PC-9 (cell line): ENCODE measurements at regions of chr7 and their contacts with region 1.

Region 1: GRCh38 chr7:41224063-41224806 is 478.7 kb downstream of the INHBA start:
- DNase-seq: peak; percentile 54 to 100
- H3K4me3 ChIP-seq: no peak overlapping the region
- H3K27ac ChIP-seq: peak overlapping the region; percentile 73
- H3K4me1 ChIP-seq: peaks cover 23% of the 10 kb centered on the region
- H3K27me3 ChIP-seq: no peaks in the 10 kb centered on the region
- CTCF ChIP-seq: no peak

Region 2: DNA sequence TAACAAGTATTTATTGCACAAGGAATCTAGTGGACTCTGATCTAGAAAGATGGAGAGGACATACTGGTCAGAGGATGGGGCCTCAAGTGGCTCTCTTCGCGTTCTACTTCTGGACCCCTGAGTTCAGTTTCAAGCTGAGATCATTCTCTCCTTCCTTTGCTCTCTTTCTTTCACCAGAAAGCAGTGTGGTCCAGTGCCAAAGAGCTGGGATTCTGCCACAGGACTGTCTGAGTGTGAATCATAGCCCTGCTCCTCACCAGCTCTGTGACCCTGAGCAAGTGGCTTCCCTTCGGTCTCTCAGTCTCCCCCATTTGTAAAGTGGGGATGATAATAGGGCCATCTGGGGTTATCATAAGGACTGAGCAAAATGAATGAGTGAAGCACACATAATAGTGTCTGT is 374.2 kb before region 1 on chr7:
- CTCF ChIA-PET with region 1: no interaction called
- POLR2A ChIA-PET with region 1: no interaction called
- intact Hi-C with region 1: no loop called
- DNase-seq: no peak
- H3K4me3 ChIP-seq: no peak overlapping the region
- H3K27ac ChIP-seq: no peak overlapping the region
- H3K4me1 ChIP-seq: no peaks in the 10 kb centered on the region
- H3K27me3 ChIP-seq: no peaks in the 10 kb centered on the region
- CTCF ChIP-seq: no peak

Region 3: DNA sequence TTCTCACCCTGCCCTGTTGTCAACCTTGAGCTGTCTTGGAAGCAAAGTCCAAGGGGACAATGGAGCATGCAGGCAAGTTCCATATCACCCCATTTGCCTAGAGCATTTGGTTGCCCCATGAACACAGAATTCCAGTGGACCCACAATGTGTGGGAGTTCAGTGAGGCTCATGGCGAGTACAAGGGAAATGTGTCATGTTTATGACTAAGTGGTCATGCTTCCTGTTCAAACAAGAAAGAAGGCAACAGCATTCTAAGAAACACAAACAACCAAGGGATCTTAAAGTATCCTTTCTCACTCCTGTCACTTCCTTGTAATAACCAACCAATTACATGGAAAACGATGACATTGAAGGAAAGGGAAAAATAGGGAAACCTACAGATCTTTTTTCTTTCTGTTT is 34.4 kb before region 1 on chr7:
- CTCF ChIA-PET with region 1: no interaction called
- POLR2A ChIA-PET with region 1: no interaction called
- intact Hi-C with region 1: loop called (anchors 1 kb)
- DNase-seq: peak; percentile 61 to 99
- H3K4me3 ChIP-seq: no peak overlapping the region
- H3K27ac ChIP-seq: peak overlapping the region; percentile 93
- H3K4me1 ChIP-seq: peaks cover 46% of the 10 kb centered on the region
- H3K27me3 ChIP-seq: no peaks in the 10 kb centered on the region
- CTCF ChIP-seq: no peak

Region 4: GRCh38 chr7:41630741-41631140 is 406.5 kb after region 1 on chr7:
- CTCF ChIA-PET with region 1: no interaction called
- POLR2A ChIA-PET with region 1: interaction called, 10 read pairs
- intact Hi-C with region 1: no loop called
- DNase-seq: no peak
- H3K4me3 ChIP-seq: no peak overlapping the region
- H3K27ac ChIP-seq: no peak overlapping the region
- H3K4me1 ChIP-seq: no peaks in the 10 kb centered on the region
- H3K27me3 ChIP-seq: no peaks in the 10 kb centered on the region
- CTCF ChIP-seq: no peak